Breast epithelium (tissue), 4 donors: ENCODE measurements at regions of chr10 and their contacts with region 1.

Region 1: DNA sequence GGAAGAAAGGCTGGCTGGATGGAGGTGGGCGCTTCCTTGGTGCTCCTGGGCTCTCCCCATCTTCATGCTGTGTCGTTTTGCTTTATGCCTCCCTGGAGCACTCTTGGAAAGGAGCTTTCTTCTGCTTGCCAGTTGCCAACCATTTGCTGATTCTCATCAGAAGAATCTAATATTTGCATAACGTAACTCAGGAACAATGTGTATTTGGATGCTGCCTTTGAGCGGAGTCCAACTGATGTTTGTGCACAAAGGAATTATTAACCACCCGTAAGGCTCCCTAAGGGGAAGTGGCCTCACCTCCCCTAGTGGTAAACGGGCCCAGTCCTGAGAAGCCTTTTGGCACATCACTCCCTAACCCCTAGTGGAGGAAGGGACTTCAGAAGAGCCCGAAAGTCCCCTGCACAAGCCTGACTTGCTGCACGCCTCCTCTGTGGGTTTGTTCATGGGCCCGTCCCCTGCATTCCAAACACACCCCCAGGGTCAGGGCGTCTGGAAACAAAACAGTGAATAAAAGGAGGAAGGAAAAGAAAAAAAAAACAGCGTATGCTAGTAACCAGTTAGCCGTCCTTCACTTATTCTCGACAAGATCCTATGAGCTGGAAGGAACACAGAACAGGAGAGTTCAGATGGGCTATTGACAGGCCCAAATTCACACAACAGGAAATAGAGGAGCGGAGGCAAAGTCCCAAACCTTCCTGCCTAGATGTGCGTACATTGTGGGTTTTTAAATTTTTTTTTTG is 602.2 kb downstream of the LRMDA start:
- DNase-seq: peak in 1 of 2 donors; percentile 40
- H3K4me3 ChIP-seq: peak overlapping the region in 1 of 3 donors; percentile 11
- H3K27ac ChIP-seq: peak overlapping the region; percentile 34 to 49
- H3K4me1 ChIP-seq: peaks cover 3 to 11% of the 10 kb centered on the region in 2 donors
- H3K27me3 ChIP-seq: no peaks in the 10 kb centered on the region
- CTCF ChIP-seq: peak in 2 of 3 donors; percentile 29 to 36
- POLR2A ChIP-seq: no peak

Region 2: DNA sequence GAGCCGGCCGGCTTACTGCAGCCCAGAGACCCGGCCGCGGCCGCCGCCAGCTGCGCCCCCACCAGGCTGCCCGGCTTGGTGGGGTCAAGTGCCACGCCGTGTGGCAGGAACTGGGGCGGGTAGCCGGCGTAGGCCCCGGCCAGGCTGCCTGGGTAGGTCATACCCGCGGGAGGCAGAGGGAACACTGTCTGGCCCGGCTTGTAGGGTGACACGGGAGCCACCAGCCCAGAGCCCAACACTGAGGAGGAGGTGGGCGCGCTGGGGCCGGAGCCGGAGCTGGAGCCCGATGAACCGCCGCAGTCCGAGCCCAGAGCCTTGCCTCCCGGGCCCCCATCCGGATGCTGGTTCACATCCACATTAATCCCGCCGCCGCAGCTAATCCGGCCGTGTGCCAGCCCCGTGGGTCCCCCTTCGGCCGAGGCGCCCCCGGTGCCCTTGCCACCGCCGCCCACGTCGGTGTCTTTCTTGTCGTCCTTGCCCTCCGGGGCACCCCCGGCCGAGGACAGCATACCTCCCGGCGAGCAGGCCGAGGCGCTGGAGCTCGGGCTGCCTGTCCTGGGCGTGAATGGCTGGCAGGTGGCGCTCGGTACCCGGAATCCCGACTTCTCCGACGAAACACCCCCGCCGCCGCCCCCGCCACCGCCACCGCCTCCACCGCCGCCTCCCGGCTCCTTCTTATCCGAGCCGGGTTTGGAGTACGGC is 634.0 kb before region 1 on chr10:
- intact Hi-C with region 1: loop called (anchors 5 kb)
- DNase-seq: peak; percentile 63 to 82
- H3K4me3 ChIP-seq: peak overlapping the region; percentile 80 to 82 (median 81)
- H3K27ac ChIP-seq: peak overlapping the region; percentile 94
- H3K4me1 ChIP-seq: peaks cover 0 to 2% of the 10 kb centered on the region in 2 donors
- H3K27me3 ChIP-seq: peaks cover 0 to 14% of the 10 kb centered on the region in 2 donors
- CTCF ChIP-seq: peak in 1 of 3 donors; percentile 23
- POLR2A ChIP-seq: no peak

Region 3: DNA sequence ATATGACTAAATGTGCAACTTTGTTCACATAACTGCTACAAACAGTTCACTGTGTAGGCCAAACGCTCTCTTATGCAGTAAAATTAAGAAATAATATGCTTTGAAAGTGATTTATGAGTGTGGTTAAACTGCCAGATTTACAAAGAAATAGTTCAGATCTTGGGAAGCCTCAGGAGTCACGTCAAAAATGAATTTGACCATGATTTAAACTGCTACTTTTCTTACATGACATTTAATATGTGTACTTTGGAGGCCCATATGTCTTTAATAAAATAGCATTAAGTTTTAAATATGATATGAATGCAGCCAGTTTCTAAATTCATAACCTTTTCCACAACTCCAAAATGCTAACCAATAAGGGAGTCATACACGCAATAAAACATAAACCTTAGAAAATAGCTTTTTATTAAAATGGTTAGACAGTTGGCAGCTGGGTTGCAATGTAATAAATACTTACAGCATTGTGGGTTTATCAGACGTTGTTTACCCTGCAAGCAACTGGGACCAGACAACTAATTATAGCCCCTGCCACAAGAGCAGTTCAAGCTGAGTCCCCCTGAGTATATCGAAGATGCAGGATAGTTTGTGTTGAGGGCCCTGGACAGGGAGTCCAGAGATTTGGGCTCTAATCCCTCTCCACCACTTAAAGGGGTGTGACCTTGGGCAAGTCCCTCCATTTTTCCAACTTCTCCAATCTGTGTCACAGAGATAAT is 38.2 kb after region 1 on chr10:
- intact Hi-C with region 1: no loop called
- DNase-seq: no peak
- H3K4me3 ChIP-seq: no peak overlapping the region
- H3K27ac ChIP-seq: no peak overlapping the region
- H3K4me1 ChIP-seq: no peaks in the 10 kb centered on the region
- H3K27me3 ChIP-seq: no peaks in the 10 kb centered on the region
- CTCF ChIP-seq: no peak
- POLR2A ChIP-seq: no peak

Region 4: GRCh38 chr10:76082956-76083355 is 49.3 kb after region 1 on chr10:
- intact Hi-C with region 1: no loop called
- DNase-seq: no peak
- H3K4me3 ChIP-seq: no peak overlapping the region
- H3K27ac ChIP-seq: no peak overlapping the region
- H3K4me1 ChIP-seq: no peaks in the 10 kb centered on the region
- H3K27me3 ChIP-seq: no peaks in the 10 kb centered on the region
- CTCF ChIP-seq: no peak
- POLR2A ChIP-seq: no peak